ENCODE measurements at regions of chr3 and their contacts with region 1.

Region 1: GRCh38 chr3:129439817-129440617 is at the starts of genes IFT122 and MBD4:
- DNase-seq: peak; percentile 99
- H3K4me3 Mint-ChIP-seq: peak within 1 kb of the TSS; percentile 87
- H3K27ac Mint-ChIP-seq: peak within 1 kb of the TSS; percentile 89
- H3K4me1 Mint-ChIP-seq: peaks cover 53% of the 10 kb centered on the region
- H3K27me3 Mint-ChIP-seq: no peaks in the 10 kb centered on the region
- total RNA-seq, gene IFT122: 27.8 to 32.4 TPM
- total RNA-seq, gene MBD4: 50.9 to 51.0 TPM

Region 2: DNA sequence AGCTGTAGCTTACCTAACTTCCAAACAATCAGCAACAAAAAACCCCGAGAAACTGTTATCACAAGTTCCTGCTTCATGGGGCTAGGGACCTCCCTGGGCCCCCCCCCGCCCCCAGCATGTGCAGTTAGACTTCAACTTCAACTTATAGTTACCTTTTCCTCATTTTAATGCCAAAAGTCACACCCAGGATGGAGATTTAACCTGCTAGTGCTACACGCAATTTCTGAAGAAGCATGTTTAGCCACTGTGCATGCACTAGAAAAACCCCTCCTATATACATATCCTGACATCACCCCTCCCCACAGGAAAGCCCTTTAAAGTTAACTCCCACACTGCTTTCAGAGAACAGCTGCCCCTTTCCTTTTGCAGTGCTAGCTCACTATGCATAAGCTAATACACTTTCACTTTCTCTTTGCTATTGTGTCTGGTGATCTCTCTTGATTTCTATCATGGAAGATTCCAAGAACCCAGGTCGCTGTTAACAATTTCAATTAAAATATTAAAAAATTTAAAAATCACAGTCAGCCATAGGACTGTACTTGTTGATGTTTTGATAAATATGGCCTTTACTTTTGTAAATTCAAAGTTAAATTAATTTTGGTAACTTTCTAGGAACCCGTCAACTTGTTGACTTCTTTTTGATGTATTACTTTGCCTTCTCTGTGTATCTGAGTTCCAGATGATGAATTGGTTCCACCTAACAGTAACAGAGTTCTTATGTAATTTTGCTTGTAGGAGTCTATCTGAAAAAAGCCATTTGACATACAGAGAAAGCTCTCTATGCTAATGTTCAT is 635.8 kb before region 1 on chr3:
- CTCF ChIA-PET with region 1: no interaction called
- intact Hi-C with region 1: loop called (anchors 5 kb)
- DNase-seq: peak; percentile 86
- H3K4me3 Mint-ChIP-seq: peak overlapping the region; percentile 45
- H3K27ac Mint-ChIP-seq: peak overlapping the region; percentile 96
- H3K4me1 Mint-ChIP-seq: peaks cover 87% of the 10 kb centered on the region
- H3K27me3 Mint-ChIP-seq: no peaks in the 10 kb centered on the region

Region 3: DNA sequence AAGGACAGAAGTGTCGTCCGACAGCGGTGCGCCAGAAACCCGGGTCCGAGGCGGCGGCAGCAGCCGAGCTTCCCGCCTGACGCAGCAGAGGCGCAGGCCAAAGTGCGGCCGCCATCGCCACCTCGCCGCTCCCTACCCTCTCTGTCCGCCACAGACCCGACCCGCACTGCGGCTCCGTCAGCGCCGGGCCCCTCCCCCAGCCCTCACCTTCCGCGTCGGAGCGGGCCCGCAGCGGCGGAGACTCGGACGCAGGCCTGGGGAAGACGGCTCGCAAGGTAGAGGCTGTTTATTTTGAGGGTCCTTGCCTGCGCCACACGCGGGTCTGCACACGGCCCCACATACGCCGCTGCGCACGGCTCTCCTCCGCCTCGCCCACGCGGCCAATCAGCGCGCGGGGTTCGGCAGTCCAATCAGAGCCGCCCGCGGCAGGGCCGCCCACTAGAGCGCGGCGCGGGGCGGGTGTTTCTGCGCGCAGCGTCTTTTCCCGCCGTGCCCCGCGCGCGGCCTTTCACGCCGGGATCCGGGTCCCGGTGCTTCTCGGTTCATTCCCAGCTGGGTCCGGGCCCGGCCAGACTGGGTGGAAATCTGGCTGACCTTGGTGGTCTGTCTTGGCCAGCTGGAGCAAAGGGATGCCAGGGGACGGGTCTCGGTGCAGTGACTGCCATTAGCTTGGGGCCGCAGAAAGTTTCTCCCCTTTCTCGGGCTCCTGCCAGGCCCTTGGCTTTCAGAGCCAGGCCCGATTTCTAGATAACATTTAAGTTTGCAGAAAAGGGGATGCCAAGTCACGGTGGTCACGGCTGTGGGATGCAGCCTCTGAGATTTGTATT is 256.2 kb before region 1 on chr3 and contains the start of gene CNBP:
- CTCF ChIA-PET with region 1: no interaction called
- intact Hi-C with region 1: loop called (anchors 1 kb)
- DNase-seq: peak; percentile 93
- H3K4me3 Mint-ChIP-seq: peak within 1 kb of the TSS; percentile 96
- H3K27ac Mint-ChIP-seq: peak within 1 kb of the TSS; percentile 95
- H3K4me1 Mint-ChIP-seq: peaks cover 35% of the 10 kb centered on the region
- H3K27me3 Mint-ChIP-seq: no peaks in the 10 kb centered on the region
- total RNA-seq, gene CNBP: 490 to 500 TPM

Region 4: DNA sequence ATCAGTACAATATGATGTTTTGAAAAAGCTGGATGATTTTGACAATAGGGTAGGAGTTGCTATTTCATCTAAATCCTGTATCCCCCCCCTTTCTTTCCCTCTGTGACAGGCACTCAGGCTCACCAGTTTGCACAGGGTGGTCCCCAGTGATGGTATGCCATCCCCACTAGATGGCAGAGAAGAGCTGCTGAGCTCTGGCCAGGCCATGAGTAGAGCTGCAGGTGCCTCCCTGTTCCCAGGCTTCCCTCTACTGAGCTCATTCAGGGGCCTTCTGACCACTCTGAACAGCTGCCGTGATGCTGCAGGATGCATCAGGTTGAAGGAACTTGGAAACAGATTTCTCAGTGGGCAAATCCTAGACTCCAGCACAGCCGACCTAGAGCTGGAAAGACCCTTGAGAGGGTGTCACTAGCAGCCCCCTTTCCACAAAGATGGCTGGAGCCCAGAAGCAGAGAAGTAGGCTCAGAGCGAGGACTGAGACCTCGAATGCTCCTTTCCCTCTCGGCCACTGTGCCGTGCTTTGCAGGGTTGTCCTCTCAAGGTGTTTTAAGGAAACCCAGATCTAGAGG is 56.6 kb before region 1 on chr3:
- CTCF ChIA-PET with region 1: interaction called, 10 read pairs
- intact Hi-C with region 1: loop called (anchors 1 kb)
- DNase-seq: peak; percentile 65
- H3K4me3 Mint-ChIP-seq: no peak overlapping the region
- H3K27ac Mint-ChIP-seq: no peak overlapping the region
- H3K4me1 Mint-ChIP-seq: no peaks in the 10 kb centered on the region
- H3K27me3 Mint-ChIP-seq: no peaks in the 10 kb centered on the region

Region 5: DNA sequence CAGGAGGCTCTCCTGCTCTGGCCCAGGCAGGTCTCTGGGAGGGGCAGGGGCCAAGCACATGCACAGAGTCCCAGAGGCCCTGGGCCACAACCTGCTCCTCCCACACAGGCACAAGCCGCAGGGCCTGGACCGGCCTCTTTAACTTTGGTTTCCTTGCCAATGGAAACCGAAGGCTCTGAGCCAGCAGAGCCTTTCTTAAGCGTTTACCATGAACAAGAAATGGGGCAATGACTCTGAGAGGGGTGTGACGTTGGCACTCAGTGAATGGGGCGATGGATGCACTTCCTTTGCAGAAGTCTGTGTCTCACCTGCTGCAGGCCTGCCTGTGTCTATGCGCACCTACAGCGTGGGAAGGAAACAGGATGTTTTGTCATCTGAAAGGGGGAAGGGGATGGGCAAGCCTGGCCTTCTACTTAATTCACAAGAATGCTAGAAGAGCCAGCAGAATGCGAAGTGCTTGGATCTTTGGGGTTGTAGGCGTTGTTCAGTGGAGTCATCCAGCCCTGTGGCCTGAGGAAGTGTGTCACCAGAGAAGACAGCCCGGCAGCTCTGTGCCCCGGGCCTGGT is 41.8 kb after region 1 on chr3:
- CTCF ChIA-PET with region 1: no interaction called
- intact Hi-C with region 1: loop called (anchors 2 kb)
- DNase-seq: peak; percentile 73
- H3K4me3 Mint-ChIP-seq: no peak overlapping the region
- H3K27ac Mint-ChIP-seq: peak overlapping the region; percentile 69
- H3K4me1 Mint-ChIP-seq: peaks cover 13% of the 10 kb centered on the region
- H3K27me3 Mint-ChIP-seq: no peaks in the 10 kb centered on the region

Region 6: GRCh38 chr3:129824926-129825541 is 385.0 kb after region 1 on chr3:
- CTCF ChIA-PET with region 1: no interaction called
- intact Hi-C with region 1: loop called (anchors 5 kb)
- DNase-seq: peak; percentile 63
- H3K4me3 Mint-ChIP-seq: no peak overlapping the region
- H3K27ac Mint-ChIP-seq: no peak overlapping the region
- H3K4me1 Mint-ChIP-seq: peaks cover 19% of the 10 kb centered on the region
- H3K27me3 Mint-ChIP-seq: no peaks in the 10 kb centered on the region